Right cardiac atrium (tissue), 5 donors: ENCODE measurements at regions of chr20 and their contacts with region 1.

Region 1: GRCh38 chr20:19205977-19206396 is 6.5 kb upstream of the SLC24A3 start:
- DNase-seq: peak; percentile 67 to 90 (median 86)
- ATAC-seq: peak; percentile 57 to 66
- H3K4me3 ChIP-seq: no peak overlapping the region
- H3K27ac ChIP-seq: no peak overlapping the region
- H3K4me1 ChIP-seq: no peaks in the 10 kb centered on the region
- H3K27me3 ChIP-seq: no peaks in the 10 kb centered on the region

Region 2: GRCh38 chr20:19098806-19099578 is 107.0 kb before region 1 on chr20:
- intact Hi-C with region 1: no loop called
- DNase-seq: no peak
- ATAC-seq: no peak
- H3K4me3 ChIP-seq: no peak overlapping the region
- H3K27ac ChIP-seq: no peak overlapping the region
- H3K4me1 ChIP-seq: no peaks in the 10 kb centered on the region
- H3K27me3 ChIP-seq: no peaks in the 10 kb centered on the region

Region 3: GRCh38 chr20:19583532-19584175 is 377.7 kb after region 1 on chr20:
- intact Hi-C with region 1: loop called (anchors 2 to 5 kb)
- DNase-seq: peak; percentile 47 to 88 (median 88)
- ATAC-seq: peak; percentile 71 to 77
- H3K4me3 ChIP-seq: no peak overlapping the region
- H3K27ac ChIP-seq: no peak overlapping the region
- H3K4me1 ChIP-seq: no peaks in the 10 kb centered on the region
- H3K27me3 ChIP-seq: no peaks in the 10 kb centered on the region

Region 4: GRCh38 chr20:19588732-19589131 is 382.7 kb after region 1 on chr20:
- intact Hi-C with region 1: loop called (anchors 2 to 5 kb)
- DNase-seq: peak in 1 of 3 donors; percentile 66
- ATAC-seq: peak; percentile 16 to 62
- H3K4me3 ChIP-seq: no peak overlapping the region
- H3K27ac ChIP-seq: no peak overlapping the region
- H3K4me1 ChIP-seq: no peaks in the 10 kb centered on the region
- H3K27me3 ChIP-seq: no peaks in the 10 kb centered on the region

Region 5: DNA sequence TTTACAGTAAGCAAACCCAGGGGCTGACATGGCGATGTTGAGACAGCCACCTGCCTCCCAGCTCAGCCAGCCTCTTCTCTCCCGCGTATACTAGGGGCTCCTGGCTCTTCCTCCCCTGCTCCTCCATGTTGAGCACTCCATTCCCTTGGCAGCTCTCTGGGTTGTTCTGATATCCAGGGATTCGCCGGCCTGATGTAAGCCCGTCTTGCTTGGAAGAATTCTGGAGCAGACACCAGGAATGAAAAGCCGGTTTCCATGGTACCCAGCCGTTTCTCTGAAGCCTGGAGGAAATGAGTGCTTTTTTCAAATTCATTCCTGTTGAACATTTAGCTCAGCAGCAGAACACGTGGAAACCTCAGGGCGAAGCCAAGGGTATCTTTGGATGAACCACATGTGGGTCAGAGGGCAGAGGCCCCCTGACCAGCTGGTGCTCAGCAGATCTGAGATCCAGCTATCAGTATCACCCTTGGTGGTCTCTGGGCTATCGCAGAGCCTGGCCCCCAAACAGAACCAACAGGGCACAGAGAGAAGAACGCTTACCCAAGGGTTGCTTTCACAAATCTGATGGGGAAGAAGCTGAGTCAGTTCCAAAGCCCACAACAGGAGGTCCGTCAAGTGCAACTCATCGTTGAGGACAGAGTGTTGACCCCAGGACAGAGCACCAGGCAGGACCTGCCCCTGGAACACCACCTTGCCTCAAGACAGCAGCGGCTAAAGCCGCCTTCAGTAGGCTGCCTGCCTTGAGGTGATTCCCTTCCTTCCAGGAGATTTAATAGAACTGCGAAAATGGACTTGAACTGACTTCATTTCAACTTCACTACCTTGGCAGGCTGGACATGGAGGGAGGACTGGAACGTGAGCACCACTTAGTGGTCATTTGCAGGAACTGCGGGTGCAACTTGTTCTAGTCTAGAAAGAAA is 456.0 kb after region 1 on chr20:
- intact Hi-C with region 1: loop called (anchors 2 to 5 kb)
- DNase-seq: peak; percentile 55 to 78 (median 73)
- ATAC-seq: peak; percentile 76 to 83
- H3K4me3 ChIP-seq: no peak overlapping the region
- H3K27ac ChIP-seq: no peak overlapping the region
- H3K4me1 ChIP-seq: no peaks in the 10 kb centered on the region
- H3K27me3 ChIP-seq: no peaks in the 10 kb centered on the region